Activated T-helper 2 cell treated with anti-CD3 and anti-CD28 coated beads, Interferon-gamma antibody, Interleukin-2, Interleukin-4, amounts not matched to agents 10 μg/mL and 5 μg/mL and 100 μg/mL, durations not matched to agents 14 hours and 24 hours and 36 hours (primary cell): ENCODE measurements at regions of chr14 and their contacts with region 1.

Region 1: GRCh38 chr14:75249251-75249957 is 29.2 kb upstream of the FOS start:
- DNase-seq: peak; percentile 88
- H3K4me3 Mint-ChIP-seq: peak overlapping the region; percentile 37
- H3K27ac Mint-ChIP-seq: peak overlapping the region; percentile 68
- H3K4me1 Mint-ChIP-seq: peaks cover 48% of the 10 kb centered on the region
- H3K27me3 Mint-ChIP-seq: peaks cover 37% of the 10 kb centered on the region

Region 2: DNA sequence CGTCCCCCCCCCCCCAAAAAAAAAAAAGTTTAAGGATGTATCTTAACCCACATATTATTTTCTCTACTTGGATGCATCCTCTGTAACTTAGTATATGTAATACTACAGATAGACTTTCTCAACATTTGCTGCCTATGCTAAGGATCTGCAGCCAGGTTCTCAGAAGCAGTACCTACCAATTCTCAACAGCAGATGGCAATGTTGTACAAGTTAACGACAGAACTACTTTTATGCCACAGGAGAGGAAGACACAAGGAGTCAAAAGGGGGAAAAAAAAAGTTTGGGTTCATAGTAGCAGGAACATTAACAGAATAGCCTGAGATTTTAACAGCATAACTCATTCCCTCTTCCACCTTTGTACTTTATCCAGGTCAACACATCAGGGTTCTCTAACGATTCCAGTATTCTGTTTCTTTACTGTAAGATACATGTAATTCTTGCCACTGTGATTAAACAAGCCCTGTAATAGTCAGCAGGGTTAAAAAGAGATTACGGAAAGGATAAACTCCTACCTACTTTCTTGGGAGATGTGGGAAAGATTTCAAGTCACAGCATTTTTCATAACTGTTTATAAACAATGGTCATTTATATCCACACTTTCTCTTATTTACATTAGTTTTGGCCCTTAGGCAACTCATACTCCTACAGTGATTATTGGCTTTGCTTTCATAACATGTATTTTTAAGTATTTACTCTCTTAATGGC is 116.9 kb before region 1 on chr14:
- intact Hi-C with region 1: loop called (anchors 1 kb)
- DNase-seq: peak; percentile 40
- H3K4me3 Mint-ChIP-seq: no peak overlapping the region
- H3K27ac Mint-ChIP-seq: no peak overlapping the region
- H3K4me1 Mint-ChIP-seq: peaks cover 22% of the 10 kb centered on the region
- H3K27me3 Mint-ChIP-seq: no peaks in the 10 kb centered on the region

Region 3: DNA sequence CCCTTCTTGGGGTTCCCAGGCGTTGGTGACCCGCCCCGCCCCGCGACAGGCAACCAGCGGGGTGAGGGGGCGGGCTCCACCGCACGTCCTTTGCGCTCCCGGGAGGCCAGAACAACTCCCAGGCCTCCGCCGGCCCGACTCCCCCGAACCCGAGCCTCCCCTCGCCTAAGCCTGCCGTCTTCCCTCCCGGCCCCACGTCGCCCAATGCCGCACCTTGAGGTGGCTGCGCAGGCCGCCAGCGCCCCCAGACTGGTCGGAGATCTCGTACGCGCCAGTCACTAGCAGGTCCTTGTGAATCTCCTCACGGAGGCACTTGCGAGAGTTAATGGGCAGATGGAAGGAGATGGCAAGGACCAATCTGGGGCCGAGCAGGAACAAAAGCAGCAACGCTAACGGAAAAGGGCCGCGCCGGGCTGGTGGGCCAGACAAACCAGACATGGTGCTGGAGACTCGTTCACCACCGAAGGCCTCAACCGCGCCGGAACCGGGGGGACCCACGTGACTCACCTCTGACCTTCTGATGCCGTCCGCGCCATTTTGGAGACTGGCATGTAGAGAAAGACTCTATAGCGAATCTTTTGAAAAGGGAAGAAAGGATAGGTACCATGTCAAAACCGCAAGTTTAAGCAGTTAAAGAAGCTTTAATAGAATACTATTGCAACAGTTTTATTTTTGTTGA is 73.1 kb before region 1 on chr14 and contains the start of gene TMED10:
- intact Hi-C with region 1: loop called (anchors 1 kb)
- DNase-seq: peak; percentile 88
- H3K4me3 Mint-ChIP-seq: peak within 1 kb of the TSS; percentile 87
- H3K27ac Mint-ChIP-seq: peak within 1 kb of the TSS; percentile 92
- H3K4me1 Mint-ChIP-seq: peaks cover 25% of the 10 kb centered on the region
- H3K27me3 Mint-ChIP-seq: peaks cover 3% of the 10 kb centered on the region
- total RNA-seq, gene TMED10: 231 and 248 TPM in 2 replicates

Region 4: GRCh38 chr14:75230140-75231045 is 19.0 kb before region 1 on chr14:
- intact Hi-C with region 1: loop called (anchors 1 kb)
- DNase-seq: peak; percentile 22
- H3K4me3 Mint-ChIP-seq: no peak overlapping the region
- H3K27ac Mint-ChIP-seq: no peak overlapping the region
- H3K4me1 Mint-ChIP-seq: peaks cover 39% of the 10 kb centered on the region
- H3K27me3 Mint-ChIP-seq: peaks cover 17% of the 10 kb centered on the region

Region 5: DNA sequence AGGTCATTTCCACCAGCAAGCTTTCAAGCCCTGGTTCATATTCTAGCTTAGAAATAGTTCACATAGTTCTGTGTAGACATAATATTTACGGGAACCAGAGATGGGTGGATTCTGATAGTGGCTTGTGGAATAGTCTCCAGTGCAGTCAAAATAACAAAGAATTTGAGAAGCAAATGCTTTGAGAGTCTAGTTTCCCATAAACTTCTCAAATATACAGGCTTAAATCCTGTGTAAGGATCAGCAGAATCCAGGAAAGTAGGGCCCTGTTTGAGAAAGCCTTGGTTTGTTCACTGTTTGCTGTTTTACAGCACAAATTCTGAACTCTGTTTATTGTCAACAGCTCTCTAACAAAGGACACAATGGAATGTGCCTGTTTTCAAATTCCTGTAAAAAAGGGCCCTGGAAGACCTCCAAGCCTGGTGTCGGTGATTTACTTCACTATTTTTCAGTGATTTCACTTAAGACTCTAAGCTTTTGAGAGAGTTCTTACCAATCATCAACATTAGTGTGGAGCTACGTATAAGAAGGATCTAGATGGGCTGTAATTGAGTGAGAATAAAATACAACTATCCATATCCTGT is 17.8 kb after region 1 on chr14:
- intact Hi-C with region 1: no loop called
- DNase-seq: no peak
- H3K4me3 Mint-ChIP-seq: no peak overlapping the region
- H3K27ac Mint-ChIP-seq: no peak overlapping the region
- H3K4me1 Mint-ChIP-seq: peaks cover 11% of the 10 kb centered on the region
- H3K27me3 Mint-ChIP-seq: peaks cover 52% of the 10 kb centered on the region

Region 6: GRCh38 chr14:75293920-75294642 is 44.7 kb after region 1 on chr14:
- intact Hi-C with region 1: loop called (anchors 1 kb)
- DNase-seq: peak; percentile 90
- H3K4me3 Mint-ChIP-seq: peak overlapping the region; percentile 84
- H3K27ac Mint-ChIP-seq: peak overlapping the region; percentile 91
- H3K4me1 Mint-ChIP-seq: peaks cover 27% of the 10 kb centered on the region
- H3K27me3 Mint-ChIP-seq: peaks cover 20% of the 10 kb centered on the region

Region 7: GRCh38 chr14:75522224-75522982 is 273.0 kb after region 1 on chr14 and contains the start of gene BATF:
- intact Hi-C with region 1: no loop called
- DNase-seq: peak; percentile 76
- H3K4me3 Mint-ChIP-seq: peak within 1 kb of the TSS; percentile 100
- H3K27ac Mint-ChIP-seq: peak within 1 kb of the TSS; percentile 99
- H3K4me1 Mint-ChIP-seq: peaks cover 66% of the 10 kb centered on the region
- H3K27me3 Mint-ChIP-seq: no peaks in the 10 kb centered on the region
- total RNA-seq, gene BATF: 152 and 154 TPM in 2 replicates

Region 8: GRCh38 chr14:75542588-75543091 is 293.2 kb after region 1 on chr14:
- intact Hi-C with region 1: loop called (anchors 5 kb)
- DNase-seq: peak; percentile 73
- H3K4me3 Mint-ChIP-seq: peak overlapping the region; percentile 61
- H3K27ac Mint-ChIP-seq: peak overlapping the region; percentile 97
- H3K4me1 Mint-ChIP-seq: peaks cover 57% of the 10 kb centered on the region
- H3K27me3 Mint-ChIP-seq: no peaks in the 10 kb centered on the region

Region 9: GRCh38 chr14:75615200-75615599 is 365.8 kb after region 1 on chr14:
- intact Hi-C with region 1: no loop called
- DNase-seq: no peak
- H3K4me3 Mint-ChIP-seq: no peak overlapping the region
- H3K27ac Mint-ChIP-seq: no peak overlapping the region
- H3K4me1 Mint-ChIP-seq: no peaks in the 10 kb centered on the region
- H3K27me3 Mint-ChIP-seq: no peaks in the 10 kb centered on the region